Head of caudate nucleus (tissue), 42 donors: ENCODE measurements at regions of chr6 and their contacts with region 1.

Region 1: GRCh38 chr6:167130008-167130677 is 7.2 kb downstream of the CCR6 start:
- DNase-seq: no peak

Region 2: GRCh38 chr6:166786704-166787293 is 343.3 kb before region 1 on chr6:
- intact Hi-C with region 1: loop called (anchors 10 kb)
- DNase-seq: peak in 10 of 42 donors; percentile 11 to 64 (median 40)

Region 3: DNA sequence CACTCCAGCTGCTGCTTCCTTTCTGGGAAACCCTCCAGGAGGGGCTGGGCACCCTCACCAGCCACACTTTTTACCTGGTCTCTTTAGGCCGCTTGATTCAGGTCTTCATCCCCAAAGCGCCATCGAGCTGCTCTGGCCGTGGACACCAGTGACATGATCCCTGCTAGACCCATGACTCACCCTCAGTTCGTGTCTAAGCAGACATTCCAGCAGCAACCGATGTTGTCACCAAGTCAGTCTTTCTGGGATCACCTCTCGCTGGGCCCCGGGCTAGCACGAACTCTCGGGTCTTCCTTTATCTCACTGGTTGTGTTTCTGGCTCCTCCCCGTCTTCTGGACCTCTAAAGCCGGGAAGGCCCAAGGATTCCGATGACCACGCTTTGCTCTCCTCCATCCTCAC is 70.7 kb after region 1 on chr6:
- intact Hi-C with region 1: no loop called
- DNase-seq: peak in 1 of 42 donors; percentile 25